ENCODE measurements at regions of chr10 and their contacts with region 1.

Region 1: GRCh38 chr10:122648599-122649428 is 50.8 kb downstream of the C10orf120 start:
- DNase-seq: peak; percentile 34 to 88
- H3K4me3 ChIP-seq: no peak overlapping the region
- H3K27ac ChIP-seq: no peak overlapping the region
- H3K4me1 ChIP-seq: no peaks in the 10 kb centered on the region
- H3K27me3 ChIP-seq: peaks cover 0 to 3% (median 0%) of the 10 kb centered on the region in 4 experiments; a peak in 1 of 7 replicates
- CTCF ChIP-seq: peak; percentile 88 to 91 (median 88)
- EP300 ChIP-seq: no peak
- POLR2A ChIP-seq: no peak
- RAD21 ChIP-seq: peak; percentile 88 to 94

Region 2: GRCh38 chr10:122541541-122542002 is 107.2 kb before region 1 on chr10:
- CTCF ChIA-PET with region 1: no interaction called
- POLR2A ChIA-PET with region 1: no interaction called
- DNase-seq: no peak
- H3K4me3 ChIP-seq: no peak overlapping the region
- H3K27ac ChIP-seq: no peak overlapping the region
- H3K4me1 ChIP-seq: no peaks in the 10 kb centered on the region
- H3K27me3 ChIP-seq: no peaks in the 10 kb centered on the region
- CTCF ChIP-seq: no peak
- EP300 ChIP-seq: no peak
- POLR2A ChIP-seq: no peak
- RAD21 ChIP-seq: no peak

Region 3: DNA sequence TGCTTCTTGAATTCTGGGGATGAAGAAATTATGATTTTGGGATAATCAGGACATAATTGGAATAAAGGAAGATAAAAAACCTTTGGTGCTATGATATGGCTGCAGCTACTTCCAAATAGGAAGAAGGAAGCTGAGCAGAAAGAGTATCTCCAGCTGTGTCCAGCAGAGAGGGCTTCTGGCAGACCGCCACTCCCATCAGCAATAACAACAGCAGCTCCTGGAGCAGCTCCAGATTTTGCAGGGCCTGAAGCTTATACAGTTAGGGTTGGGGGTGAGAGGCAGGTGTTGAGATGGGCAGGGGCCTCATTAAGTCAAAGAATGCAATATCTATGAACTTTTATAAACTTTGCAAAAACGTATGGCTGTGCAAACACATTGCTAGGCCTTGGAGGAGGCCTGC is 11.4 kb before region 1 on chr10:
- CTCF ChIA-PET with region 1: interaction called, 42 read pairs
- POLR2A ChIA-PET with region 1: no interaction called
- DNase-seq: no peak
- H3K4me3 ChIP-seq: no peak overlapping the region
- H3K27ac ChIP-seq: no peak overlapping the region
- H3K4me1 ChIP-seq: no peaks in the 10 kb centered on the region
- H3K27me3 ChIP-seq: no peaks in the 10 kb centered on the region
- CTCF ChIP-seq: no peak
- EP300 ChIP-seq: no peak
- POLR2A ChIP-seq: no peak
- RAD21 ChIP-seq: no peak

Region 4: DNA sequence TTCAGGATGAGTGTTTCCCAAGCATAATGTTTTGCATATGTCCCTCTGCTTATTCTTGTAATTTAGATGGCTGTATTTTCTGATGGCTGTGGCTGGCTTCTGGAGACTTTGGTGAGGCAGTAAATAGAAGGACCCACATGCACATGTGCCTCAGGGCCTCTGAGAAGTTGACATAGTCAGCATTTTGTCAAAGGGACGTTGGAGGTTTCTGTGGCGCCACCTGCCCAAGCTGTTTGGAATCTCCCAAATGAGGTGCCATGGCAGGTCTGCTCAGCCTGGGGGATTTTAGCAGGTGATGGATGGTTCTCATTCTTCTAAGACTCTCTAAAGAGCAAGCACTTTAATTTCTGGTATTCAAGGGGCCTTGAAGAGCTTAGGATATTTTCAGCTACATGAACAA is 21.0 kb after region 1 on chr10:
- CTCF ChIA-PET with region 1: interaction called, 27 read pairs
- POLR2A ChIA-PET with region 1: no interaction called
- DNase-seq: no peak
- H3K4me3 ChIP-seq: no peak overlapping the region
- H3K27ac ChIP-seq: no peak overlapping the region
- H3K4me1 ChIP-seq: 0 out of 7 replicates have a peak, but pooled peaks cover 0 to 2% (median 0%) of the 10 kb centered on the region in 4 experiments
- H3K27me3 ChIP-seq: no peaks in the 10 kb centered on the region
- CTCF ChIP-seq: peak; percentile 31 to 54 (median 46); a peak in 3 of 4 replicates
- EP300 ChIP-seq: no peak
- POLR2A ChIP-seq: no peak
- RAD21 ChIP-seq: peak in 1 of 2 experiments; percentile 42; a peak in 2 of 4 replicates

Region 5: GRCh38 chr10:122682522-122682921 is 33.7 kb after region 1 on chr10:
- CTCF ChIA-PET with region 1: interaction called, 19 read pairs
- POLR2A ChIA-PET with region 1: no interaction called
- DNase-seq: no peak
- H3K4me3 ChIP-seq: no peak overlapping the region
- H3K27ac ChIP-seq: no peak overlapping the region
- H3K4me1 ChIP-seq: no peaks in the 10 kb centered on the region
- H3K27me3 ChIP-seq: no peaks in the 10 kb centered on the region
- CTCF ChIP-seq: no peak
- EP300 ChIP-seq: no peak
- POLR2A ChIP-seq: no peak
- RAD21 ChIP-seq: no peak

Region 6: GRCh38 chr10:122688293-122688994 is 39.6 kb after region 1 on chr10:
- CTCF ChIA-PET with region 1: interaction called, 37 read pairs
- POLR2A ChIA-PET with region 1: no interaction called
- DNase-seq: no peak
- H3K4me3 ChIP-seq: no peak overlapping the region
- H3K27ac ChIP-seq: no peak overlapping the region
- H3K4me1 ChIP-seq: 0 out of 7 replicates have a peak, but pooled peaks cover 0 to 2% (median 0%) of the 10 kb centered on the region in 4 experiments
- H3K27me3 ChIP-seq: no peaks in the 10 kb centered on the region
- CTCF ChIP-seq: peak in 2 of 3 experiments; percentile 2 to 31; a peak in 2 of 4 replicates
- EP300 ChIP-seq: no peak
- POLR2A ChIP-seq: no peak
- RAD21 ChIP-seq: peak; percentile 34 to 42; a peak in 3 of 4 replicates

Region 7: DNA sequence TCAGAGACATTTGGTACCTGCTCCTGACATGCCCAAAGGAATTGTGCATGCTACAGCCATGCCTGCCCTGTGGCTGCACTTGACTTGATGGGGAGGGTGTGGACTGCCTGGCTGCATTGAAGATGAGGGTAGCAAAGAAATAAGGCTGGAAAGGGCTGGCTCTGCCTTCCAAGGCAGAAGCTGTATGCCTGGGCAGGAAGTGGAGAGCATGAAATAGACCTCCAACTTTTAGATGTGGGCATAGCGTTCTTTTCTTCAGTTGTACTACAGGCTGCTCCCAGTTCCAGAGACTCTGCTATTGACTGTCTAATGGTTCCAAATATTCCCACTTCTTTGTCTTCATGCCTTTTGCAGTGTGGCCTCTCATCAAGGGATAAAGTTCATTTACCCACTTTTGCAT is 47.9 kb after region 1 on chr10:
- CTCF ChIA-PET with region 1: interaction called, 37 read pairs
- POLR2A ChIA-PET with region 1: no interaction called
- DNase-seq: no peak
- H3K4me3 ChIP-seq: no peak overlapping the region
- H3K27ac ChIP-seq: no peak overlapping the region
- H3K4me1 ChIP-seq: no peaks in the 10 kb centered on the region
- H3K27me3 ChIP-seq: no peaks in the 10 kb centered on the region; a peak in 1 of 7 replicates
- CTCF ChIP-seq: no peak
- EP300 ChIP-seq: no peak
- POLR2A ChIP-seq: no peak
- RAD21 ChIP-seq: no peak

Region 8: GRCh38 chr10:122703439-122704118 is 54.8 kb after region 1 on chr10:
- CTCF ChIA-PET with region 1: interaction called, 56 read pairs
- POLR2A ChIA-PET with region 1: no interaction called
- DNase-seq: peak; percentile 46 to 86
- H3K4me3 ChIP-seq: no peak overlapping the region
- H3K27ac ChIP-seq: no peak overlapping the region
- H3K4me1 ChIP-seq: no peaks in the 10 kb centered on the region; a peak in 1 of 7 replicates
- H3K27me3 ChIP-seq: no peaks in the 10 kb centered on the region
- CTCF ChIP-seq: peak; percentile 92 to 97 (median 95)
- EP300 ChIP-seq: no peak
- POLR2A ChIP-seq: no peak
- RAD21 ChIP-seq: peak; percentile 99

Measured in H1 (cell line).